ENCODE measurements at regions of chr17 and their contacts with region 1.

Region 1: GRCh38 chr17:58112970-58113631 is 29.9 kb downstream of the DYNLL2 start:
- DNase-seq: peak; percentile 80
- ATAC-seq: peak; percentile 73

Region 2: DNA sequence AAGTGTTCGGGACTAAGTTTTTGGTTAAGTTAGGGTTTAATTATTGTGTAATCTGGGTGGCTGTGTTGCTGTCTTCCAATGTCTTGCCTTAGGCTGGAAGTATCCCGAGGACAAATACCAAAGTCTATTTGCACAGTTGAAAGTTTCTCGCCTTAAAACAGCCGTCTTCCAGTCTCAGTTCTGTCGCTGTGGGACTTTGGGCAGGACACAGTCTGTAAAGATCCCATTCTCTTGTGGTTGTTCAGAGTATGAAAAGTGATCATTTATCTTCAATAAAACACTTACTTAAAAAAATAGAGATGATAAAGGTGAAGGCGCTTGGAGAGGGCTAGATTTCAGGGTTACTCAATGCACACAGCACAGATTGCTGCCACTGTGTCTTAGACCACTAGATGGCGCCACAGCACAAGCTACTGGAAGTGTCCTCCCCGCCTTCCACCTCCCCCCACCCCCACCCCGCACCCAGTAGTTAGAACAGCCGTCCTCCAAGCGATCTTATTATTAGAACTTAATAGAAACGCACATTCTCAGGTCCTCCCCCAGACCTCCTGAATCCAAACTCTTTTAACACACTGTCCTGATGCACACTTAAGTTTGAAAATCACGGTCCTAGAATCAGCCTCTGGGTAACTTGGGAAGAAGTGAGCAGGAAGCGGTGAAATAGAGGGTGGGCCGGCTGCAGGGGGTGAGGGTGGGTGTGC is 982.2 kb before region 1 on chr17:
- intact Hi-C with region 1: loop called (anchors 5 kb)
- DNase-seq: peak; percentile 85
- ATAC-seq: peak; percentile 86

Region 3: GRCh38 chr17:57855391-57856035 is 257.6 kb before region 1 on chr17:
- intact Hi-C with region 1: loop called (anchors 5 kb)
- DNase-seq: no peak
- ATAC-seq: no peak

Region 4: DNA sequence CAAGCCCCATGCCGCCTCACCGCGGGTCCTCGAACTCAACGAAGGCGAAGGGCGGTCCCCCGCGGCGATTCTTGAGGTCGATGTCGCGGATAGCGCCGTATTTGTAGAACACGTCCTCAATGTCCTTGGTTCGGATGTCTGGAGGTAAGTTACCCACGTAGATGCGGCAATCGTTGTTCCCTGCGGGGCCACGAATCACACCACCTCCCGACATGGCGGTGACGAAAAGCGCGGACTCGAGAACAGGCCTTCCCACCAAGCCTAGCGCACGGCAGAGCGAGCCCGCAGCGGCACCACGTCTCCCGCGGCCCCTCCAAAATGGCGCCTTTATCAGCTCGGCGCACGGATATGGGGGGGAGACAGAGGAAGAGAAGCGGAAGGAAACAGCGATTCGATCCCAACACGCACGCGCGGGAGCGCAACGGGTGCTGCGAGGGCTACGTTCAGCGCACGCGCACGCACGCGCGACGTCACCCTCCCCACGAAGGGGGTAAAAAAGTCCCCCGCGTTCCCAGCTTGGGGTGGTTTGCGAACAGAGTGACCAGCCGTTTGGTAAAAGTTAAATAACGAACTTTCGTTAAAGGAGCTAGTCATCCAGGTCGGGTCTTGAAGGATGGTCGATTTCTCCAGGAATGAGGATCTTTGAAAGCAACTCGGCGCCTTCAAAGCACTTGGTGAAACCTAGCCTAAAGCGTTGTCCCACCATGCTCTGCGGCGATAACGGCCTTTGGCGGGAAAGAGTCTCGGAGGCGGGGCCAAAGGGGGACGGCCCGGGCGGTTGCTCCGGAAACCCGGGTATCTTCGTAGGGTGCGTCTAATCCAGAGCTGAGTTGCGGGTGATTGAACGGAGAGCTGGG is 105.9 kb before region 1 on chr17 and contains the start of gene SRSF1:
- intact Hi-C with region 1: loop called (anchors 2 kb)
- DNase-seq: peak; percentile 99
- ATAC-seq: peak; percentile 96
- total RNA-seq, gene SRSF1: 92.8 TPM

Region 5: GRCh38 chr17:58046239-58047094 is 66.6 kb before region 1 on chr17:
- intact Hi-C with region 1: no loop called
- DNase-seq: no peak
- ATAC-seq: peak; percentile 75

Region 6: DNA sequence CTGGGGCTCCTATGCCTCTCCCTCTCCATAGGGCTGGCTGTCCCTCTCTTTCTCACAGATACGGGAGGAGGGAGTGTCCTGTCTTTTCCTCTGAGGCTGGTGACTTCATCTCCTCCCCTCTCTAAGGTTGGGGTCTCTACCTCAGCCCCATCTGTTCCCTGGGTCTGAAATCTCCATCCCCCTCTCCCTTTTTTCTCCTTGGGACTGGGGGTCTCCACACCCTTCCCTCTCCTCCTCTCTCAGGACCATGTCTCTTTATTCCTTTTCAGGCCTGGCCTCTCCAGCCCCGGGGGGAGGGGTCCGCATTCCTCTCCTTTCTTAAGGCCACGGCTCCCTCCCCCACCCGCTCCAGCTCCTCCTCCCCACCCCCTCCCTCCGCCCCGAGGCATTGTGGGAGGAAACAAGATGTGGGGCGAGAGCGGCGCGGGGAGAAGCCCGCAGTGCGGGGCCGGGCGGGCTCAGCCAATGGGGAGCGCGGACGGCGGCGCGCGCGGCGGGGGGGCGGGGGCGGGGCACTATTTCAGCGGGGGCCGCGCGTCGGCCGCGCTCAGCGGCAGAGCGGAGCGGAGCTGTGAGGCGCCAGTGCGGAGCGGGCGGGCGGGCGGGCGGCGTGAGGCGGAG is 30.1 kb before region 1 on chr17 and contains the start of gene DYNLL2:
- intact Hi-C with region 1: loop called (anchors 2 kb)
- DNase-seq: peak; percentile 98
- ATAC-seq: peak; percentile 94
- total RNA-seq, gene DYNLL2: 81.4 TPM

Region 7: GRCh38 chr17:58808645-58809563 is 695.8 kb after region 1 on chr17:
- intact Hi-C with region 1: no loop called
- DNase-seq: no peak
- ATAC-seq: peak; percentile 64